ENCODE measurements at regions of chr17 and their contacts with region 1.

Region 1: DNA sequence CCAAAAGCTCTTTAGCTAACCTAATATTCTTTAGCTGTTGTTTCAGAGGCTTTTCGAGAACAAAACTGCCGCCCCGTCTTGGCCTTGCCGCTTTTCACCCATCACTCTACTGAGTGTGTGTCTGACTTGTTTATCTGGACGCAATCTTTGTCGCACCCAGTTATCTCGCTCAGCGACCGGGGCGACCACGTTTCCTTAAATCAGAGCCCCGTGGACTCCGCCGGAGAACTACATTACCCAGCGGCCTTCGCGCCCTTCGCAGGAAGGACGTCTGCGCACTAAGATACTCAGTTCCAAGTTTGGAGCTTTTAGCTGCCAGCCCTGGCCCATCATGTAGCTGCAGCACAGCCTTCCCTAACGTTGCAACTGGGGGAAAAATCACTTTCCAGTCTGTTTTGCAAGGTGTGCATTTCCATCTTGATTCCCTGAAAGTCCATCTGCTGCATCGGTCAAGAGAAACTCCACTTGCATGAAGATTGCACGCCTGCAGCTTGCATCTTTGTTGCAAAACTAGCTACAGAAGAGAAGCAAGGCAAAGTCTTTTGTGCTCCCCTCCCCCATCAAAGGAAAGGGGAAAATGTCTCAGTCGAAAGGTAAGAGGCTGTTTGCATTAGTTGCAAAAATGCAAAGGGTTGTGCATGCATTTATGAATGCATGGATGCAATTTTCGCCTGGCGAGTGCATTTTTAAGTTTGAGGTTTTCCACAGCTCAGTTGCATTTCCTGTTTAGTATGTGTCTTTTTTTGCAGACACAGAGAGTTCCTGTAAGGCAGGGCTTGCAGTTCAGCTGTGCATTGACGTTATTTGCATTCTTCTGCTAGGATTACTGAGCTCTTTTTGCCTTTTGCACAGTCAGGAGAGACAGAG is at the start of gene MAP2K6:
- DNase-seq: peak; percentile 88
- H3K4me3 Mint-ChIP-seq: no peak within 1 kb of the TSS
- H3K27ac Mint-ChIP-seq: no peak within 1 kb of the TSS
- H3K4me1 Mint-ChIP-seq: peaks cover 15% of the 10 kb centered on the region
- H3K27me3 Mint-ChIP-seq: no peaks in the 10 kb centered on the region
- total RNA-seq, gene MAP2K6: 2.4 to 2.7 TPM

Region 2: DNA sequence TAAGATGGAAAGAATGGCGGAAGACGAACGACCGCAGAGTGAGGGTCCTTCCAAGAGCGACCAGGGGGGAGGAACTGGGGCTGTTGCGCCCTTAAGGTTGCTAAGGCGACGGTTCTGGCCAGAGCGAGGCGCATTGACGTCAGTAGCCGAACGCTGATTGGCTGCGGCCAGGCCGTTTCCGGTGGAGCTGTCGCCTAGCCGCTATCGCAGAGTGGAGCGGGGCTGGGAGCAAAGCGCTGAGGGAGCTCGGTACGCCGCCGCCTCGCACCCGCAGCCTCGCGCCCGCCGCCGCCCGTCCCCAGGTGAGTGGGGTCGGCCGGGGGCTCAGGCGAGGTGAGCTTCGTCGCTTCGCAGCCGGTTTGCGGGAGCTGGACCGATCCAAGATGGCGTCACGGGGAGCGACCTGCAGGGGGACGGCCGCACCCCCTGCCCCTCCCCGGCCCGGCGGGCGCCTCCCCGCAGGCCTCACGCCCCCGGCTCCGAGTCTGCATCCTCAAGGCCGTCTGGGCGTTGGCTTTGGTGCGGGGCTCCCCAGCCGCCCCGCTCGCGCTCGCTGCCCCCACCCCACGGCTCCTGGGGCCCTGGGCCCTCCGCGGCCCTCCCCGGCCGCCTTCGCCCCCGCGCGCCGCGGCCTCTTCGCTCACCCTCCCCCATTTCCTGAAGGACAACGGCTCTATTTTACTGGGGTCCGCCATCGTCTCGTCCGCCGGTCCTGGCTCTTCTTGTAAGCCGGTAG is 902.2 kb before region 1 on chr17 and contains the start of gene PRKAR1A:
- CTCF ChIA-PET with region 1: no interaction called
- intact Hi-C with region 1: loop called (anchors 2 kb)
- DNase-seq: peak; percentile 95
- H3K4me3 Mint-ChIP-seq: peak within 1 kb of the TSS; percentile 99
- H3K27ac Mint-ChIP-seq: peak within 1 kb of the TSS; percentile 99
- H3K4me1 Mint-ChIP-seq: peaks cover 41% of the 10 kb centered on the region
- H3K27me3 Mint-ChIP-seq: no peaks in the 10 kb centered on the region
- total RNA-seq, gene PRKAR1A: 151 TPM

Region 3: GRCh38 chr17:69428254-69428980 is 13.8 kb after region 1 on chr17:
- CTCF ChIA-PET with region 1: interaction called, 3 read pairs
- intact Hi-C with region 1: loop called (anchors 1 kb)
- DNase-seq: peak; percentile 23
- H3K4me3 Mint-ChIP-seq: no peak overlapping the region
- H3K27ac Mint-ChIP-seq: no peak overlapping the region
- H3K4me1 Mint-ChIP-seq: peaks cover 68% of the 10 kb centered on the region
- H3K27me3 Mint-ChIP-seq: no peaks in the 10 kb centered on the region

Region 4: DNA sequence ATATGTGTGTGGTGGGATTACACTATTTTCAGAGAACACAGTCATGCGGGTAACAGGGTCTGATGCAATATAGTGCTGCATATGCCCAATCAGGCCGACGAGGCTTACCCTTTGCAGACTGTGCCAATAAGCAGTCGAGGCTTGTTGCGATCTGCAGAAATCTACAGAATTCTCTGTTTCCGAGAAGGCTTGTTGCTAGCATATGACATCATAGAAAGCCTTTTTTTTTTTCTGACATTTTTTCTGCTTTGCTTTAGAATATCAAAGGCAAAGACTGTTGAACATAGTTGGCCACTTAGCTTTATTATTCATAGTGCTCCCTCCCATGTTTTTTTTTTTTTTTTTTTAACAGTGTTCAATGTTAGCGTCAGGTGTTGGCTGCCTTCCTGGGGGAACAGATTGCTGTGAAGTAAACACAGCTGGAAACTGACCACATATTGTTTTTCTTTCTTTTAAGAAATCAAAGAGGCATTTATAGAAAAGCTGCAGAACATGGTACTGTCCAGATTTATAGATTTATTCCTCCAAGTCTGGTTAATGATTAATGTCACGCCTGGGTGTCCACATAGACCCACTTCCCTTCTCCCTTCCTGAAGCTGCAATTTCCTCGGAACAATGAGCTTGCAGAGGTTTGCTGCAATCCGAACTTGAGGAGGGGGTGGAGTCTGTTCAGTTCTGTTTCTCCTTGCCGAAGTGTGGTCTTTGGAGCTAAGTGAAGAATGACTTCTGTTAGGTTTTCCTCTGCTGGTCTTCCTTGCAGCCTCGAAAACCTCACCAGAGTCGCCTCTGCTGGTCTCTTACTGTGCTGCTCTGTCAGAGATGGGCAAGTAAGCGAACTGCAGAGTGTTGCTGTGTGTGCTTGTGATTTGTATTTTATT is 87.2 kb after region 1 on chr17:
- CTCF ChIA-PET with region 1: interaction called, 3 read pairs
- intact Hi-C with region 1: loop called (anchors 10 kb)
- DNase-seq: peak; percentile 26
- H3K4me3 Mint-ChIP-seq: peak overlapping the region; percentile 31
- H3K27ac Mint-ChIP-seq: no peak overlapping the region
- H3K4me1 Mint-ChIP-seq: peaks cover 24% of the 10 kb centered on the region
- H3K27me3 Mint-ChIP-seq: no peaks in the 10 kb centered on the region